ENCODE measurements at regions of chr17 and their contacts with region 1.

Region 1: DNA sequence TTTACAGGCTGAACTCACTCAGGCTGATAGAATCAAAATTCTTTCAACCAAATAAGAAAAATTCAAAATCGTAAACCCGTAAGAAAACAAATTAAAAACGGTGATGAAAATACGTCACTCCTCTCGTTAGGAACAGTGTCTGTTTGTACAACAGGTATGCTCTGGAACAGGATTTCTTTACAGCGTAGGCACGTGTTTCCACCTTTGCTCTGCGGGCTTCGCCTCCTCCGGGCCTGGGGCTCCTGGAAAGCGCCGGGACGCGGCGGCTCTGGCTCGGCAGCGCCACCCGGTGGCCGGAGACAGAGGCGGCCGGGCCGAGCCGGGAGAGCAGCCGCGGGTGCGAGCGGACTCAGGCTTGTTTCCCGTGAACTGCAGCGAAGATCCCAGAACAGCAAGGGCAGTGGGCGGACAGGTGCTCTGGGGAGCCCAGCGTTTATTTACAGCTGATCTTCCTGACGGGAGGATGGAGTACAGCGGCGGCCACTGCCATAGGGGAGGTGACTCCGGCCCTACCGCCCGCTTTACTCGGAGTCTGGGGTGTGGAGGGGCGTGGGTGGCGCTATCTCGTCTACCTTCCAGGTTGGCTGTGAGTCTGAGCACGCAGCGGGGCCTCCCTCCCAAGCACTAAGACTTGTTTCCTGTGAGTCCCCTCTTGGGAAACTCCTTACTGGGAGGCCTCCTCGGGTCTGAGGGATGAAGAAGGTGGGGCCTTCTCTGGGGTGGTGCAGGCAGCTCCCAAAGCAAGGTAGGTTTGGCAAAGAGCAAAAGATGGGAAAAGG is 40.5 kb upstream of the ATP2A3 start:
- DNase-seq: peak; percentile 67
- ATAC-seq: peak; percentile 78

Region 2: DNA sequence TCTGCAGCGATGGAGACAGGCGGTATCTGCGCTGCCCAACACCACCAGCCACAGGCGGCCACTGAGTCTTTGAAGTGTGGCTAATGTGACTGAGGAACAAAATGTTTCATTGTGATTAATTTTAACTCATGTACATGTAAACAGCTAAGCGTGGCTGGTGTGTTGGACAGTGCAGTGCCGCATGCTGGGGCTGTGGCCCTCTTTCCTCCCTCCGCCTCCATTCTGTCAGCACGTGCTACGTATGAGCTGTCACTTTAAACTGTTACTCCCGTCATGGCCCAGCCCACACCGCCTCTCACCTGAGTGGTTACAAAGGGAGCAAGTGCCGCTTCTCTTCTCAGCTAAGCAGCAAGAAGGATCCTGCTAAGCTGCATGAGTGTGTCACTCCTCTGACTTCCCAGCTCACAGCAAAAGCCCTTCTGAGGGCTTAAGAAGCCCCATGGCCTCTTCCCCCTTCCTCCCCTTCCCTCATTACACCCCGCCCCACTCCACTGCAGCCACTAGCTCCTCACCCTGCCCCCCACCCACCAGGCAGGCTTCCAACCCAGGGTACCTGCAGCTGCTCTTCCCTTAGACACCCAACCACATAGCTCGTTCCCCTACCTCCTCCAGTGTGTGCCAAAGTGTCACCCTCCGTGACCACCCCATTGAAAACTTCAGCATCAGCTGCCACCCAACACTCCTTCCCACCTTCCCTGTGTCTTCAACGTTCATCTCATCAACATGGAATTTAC is 266.0 kb before region 1 on chr17:
- intact Hi-C with region 1: loop called (anchors 10 kb)
- DNase-seq: no peak
- ATAC-seq: peak; percentile 64

Region 3: GRCh38 chr17:3865176-3865575 is 139.5 kb before region 1 on chr17:
- intact Hi-C with region 1: loop called (anchors 10 kb)
- DNase-seq: no peak
- ATAC-seq: peak; percentile 60

Region 4: DNA sequence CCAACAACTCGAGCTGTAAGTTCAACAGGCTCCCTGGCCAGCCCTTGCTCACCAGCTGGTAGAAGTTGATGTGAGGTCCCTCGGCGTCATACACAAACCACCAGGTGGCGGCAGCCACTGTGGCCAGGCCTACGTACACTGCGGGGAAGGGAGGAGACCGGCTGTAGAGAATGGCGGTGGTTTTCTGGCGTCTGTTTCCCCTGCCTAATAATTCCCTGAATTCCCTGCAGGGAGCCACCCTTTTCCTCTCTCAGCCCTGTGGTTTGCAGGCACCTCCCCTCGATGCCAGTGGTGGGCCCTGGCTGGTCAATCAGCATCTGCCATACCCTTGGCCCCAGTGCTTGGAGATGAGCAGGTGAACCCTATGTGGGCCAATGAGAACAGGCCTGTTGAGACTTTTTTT is 69.6 kb before region 1 on chr17:
- intact Hi-C with region 1: loop called (anchors 2 kb)
- DNase-seq: peak; percentile 79
- ATAC-seq: peak; percentile 97